Activated naive CD4-positive, alpha-beta T cell treated with anti-CD3 and anti-CD28 coated beads for 36 hours (primary cell): ENCODE measurements at regions of chrX and their contacts with region 1.

Region 1: DNA sequence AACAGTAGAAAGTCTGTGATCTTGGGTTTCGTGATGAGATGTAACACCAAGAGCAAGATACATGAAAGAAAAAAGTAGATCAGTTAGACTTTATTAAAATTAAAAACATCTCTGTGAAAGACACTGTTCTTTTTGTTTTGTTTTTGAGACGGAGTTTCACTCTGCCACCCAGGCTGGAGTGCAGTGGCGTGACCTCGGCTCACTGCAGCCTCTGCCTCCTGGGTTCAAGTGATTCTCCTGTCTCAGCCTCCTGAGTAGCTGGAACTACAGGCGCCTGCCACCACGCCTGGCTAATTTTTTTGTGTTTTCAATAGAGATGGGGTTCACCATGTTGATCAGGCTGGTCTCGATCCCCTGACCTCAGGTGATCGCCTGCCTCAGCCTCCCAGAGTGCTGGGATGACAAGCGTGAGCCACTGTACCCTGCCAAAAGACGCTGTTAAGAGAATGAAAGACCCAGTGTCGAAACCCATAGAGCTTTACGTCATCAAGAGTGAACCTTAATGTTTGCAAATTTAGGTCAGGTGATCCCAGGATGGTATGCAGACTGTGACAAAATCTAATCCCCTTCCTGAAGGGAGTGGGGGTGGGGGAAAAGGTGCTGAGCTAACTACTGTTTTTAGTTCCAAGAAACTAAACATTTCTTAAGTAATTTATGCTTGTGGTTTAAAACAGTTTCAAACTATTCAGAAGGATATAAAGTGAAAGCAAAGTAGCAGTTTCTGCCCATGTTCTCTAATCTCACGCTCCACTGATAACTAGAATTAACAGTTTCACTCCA is 8.0 kb downstream of the OFD1 start:
- DNase-seq: peak; percentile 75
- H3K4me3 Mint-ChIP-seq: peak overlapping the region; percentile 58
- H3K27ac Mint-ChIP-seq: peak overlapping the region; percentile 85
- H3K4me1 Mint-ChIP-seq: peaks cover 31% of the 10 kb centered on the region
- H3K27me3 Mint-ChIP-seq: no peaks in the 10 kb centered on the region

Region 2: DNA sequence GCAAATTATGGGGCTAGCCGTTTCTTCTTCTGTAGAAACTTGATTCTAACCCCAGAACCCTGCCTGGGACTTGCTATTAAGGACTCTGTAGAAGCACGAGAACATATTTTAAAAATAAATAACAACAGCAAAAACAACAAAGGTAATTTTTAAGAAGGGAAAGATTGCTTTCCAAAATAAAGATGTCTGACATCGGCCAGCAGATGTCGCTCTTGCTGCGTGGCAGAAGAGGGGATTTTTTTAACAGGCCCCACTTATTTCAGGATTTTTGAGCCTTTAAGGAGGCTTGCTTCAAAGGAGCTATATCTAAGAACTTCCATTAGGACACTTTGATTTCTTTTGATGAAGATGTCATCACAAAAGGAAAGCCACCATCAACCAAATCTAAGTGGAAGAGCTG is 236.0 kb before region 1 on chrX:
- CTCF ChIA-PET with region 1: no interaction called
- intact Hi-C with region 1: loop called (anchors 5 kb)
- DNase-seq: peak; percentile 61
- H3K4me3 Mint-ChIP-seq: no peak overlapping the region
- H3K27ac Mint-ChIP-seq: no peak overlapping the region
- H3K4me1 Mint-ChIP-seq: peaks cover 7% of the 10 kb centered on the region
- H3K27me3 Mint-ChIP-seq: no peaks in the 10 kb centered on the region

Region 3: GRCh38 chrX:13653022-13653693 is 89.4 kb before region 1 on chrX and contains the start of gene TCEANC:
- CTCF ChIA-PET with region 1: interaction called, 3 read pairs
- intact Hi-C with region 1: loop called (anchors 2 kb)
- DNase-seq: peak; percentile 95
- H3K4me3 Mint-ChIP-seq: peak within 1 kb of the TSS; percentile 88
- H3K27ac Mint-ChIP-seq: peak within 1 kb of the TSS; percentile 93
- H3K4me1 Mint-ChIP-seq: peaks cover 24% of the 10 kb centered on the region
- H3K27me3 Mint-ChIP-seq: no peaks in the 10 kb centered on the region
- total RNA-seq, gene TCEANC: 2.5 to 2.7 TPM

Region 4: GRCh38 chrX:13688958-13689740 is 53.4 kb before region 1 on chrX and contains the start of gene RAB9A:
- CTCF ChIA-PET with region 1: interaction called, 4 read pairs
- intact Hi-C with region 1: loop called (anchors 2 kb)
- DNase-seq: peak; percentile 83
- H3K4me3 Mint-ChIP-seq: peak within 1 kb of the TSS; percentile 82
- H3K27ac Mint-ChIP-seq: peak within 1 kb of the TSS; percentile 96
- H3K4me1 Mint-ChIP-seq: peaks cover 65% of the 10 kb centered on the region
- H3K27me3 Mint-ChIP-seq: no peaks in the 10 kb centered on the region
- total RNA-seq, gene RAB9A: 22.8 to 23.3 TPM

Region 5: DNA sequence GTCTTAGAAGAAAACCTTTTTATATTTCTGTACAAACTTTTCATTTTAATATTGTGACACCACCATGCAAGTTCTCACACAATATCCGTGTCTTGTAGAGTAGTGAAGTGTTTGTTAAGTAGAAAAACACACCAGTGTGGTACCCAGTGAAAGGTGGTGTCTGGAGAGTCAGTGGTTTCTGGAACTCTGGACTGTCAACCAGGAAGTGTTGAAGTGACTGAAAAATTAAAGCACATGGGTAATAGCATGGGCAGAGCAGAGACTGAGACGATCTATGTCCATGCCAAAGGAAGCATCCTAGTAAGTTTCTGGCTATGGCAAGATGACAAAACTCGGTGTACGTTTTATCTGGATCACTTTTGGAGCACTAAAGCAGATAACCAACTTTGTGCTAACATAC is 31.4 kb before region 1 on chrX:
- CTCF ChIA-PET with region 1: no interaction called
- intact Hi-C with region 1: no loop called
- DNase-seq: no peak
- H3K4me3 Mint-ChIP-seq: no peak overlapping the region
- H3K27ac Mint-ChIP-seq: no peak overlapping the region
- H3K4me1 Mint-ChIP-seq: peaks cover 15% of the 10 kb centered on the region
- H3K27me3 Mint-ChIP-seq: no peaks in the 10 kb centered on the region

Region 6: DNA sequence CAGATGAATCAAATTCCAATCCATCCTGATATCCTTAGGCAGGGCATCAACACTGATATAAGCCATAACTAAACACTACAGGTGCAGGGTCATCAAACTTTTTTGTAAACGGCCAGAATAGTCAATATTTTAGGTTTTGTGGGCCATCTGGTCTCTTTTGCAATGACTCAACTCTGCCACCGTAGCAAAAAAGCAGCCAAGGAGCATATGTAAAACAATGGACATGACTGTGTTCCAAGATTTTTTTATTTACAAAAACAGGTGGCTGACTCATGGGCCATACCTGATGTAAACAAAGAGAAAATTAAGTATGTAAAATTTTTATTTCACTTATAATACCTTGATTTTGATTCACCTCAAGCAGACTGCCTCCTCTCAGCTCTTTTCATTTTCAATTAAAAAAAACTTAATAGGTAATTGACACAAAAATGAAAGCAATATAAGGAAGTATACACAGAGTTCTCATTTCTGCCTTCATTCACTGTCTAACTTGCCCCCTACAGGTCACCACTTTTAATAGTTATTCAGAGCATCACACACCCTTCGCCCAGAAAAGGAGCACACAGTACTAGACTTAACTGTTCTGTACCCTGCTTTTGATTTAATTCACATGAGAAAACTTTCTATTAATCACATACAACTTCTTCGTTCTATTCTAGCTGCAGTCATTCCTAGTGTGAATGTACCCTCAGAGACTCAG is 109.6 kb after region 1 on chrX:
- CTCF ChIA-PET with region 1: no interaction called
- intact Hi-C with region 1: no loop called
- DNase-seq: no peak
- H3K4me3 Mint-ChIP-seq: no peak overlapping the region
- H3K27ac Mint-ChIP-seq: no peak overlapping the region
- H3K4me1 Mint-ChIP-seq: no peaks in the 10 kb centered on the region
- H3K27me3 Mint-ChIP-seq: no peaks in the 10 kb centered on the region

Region 7: DNA sequence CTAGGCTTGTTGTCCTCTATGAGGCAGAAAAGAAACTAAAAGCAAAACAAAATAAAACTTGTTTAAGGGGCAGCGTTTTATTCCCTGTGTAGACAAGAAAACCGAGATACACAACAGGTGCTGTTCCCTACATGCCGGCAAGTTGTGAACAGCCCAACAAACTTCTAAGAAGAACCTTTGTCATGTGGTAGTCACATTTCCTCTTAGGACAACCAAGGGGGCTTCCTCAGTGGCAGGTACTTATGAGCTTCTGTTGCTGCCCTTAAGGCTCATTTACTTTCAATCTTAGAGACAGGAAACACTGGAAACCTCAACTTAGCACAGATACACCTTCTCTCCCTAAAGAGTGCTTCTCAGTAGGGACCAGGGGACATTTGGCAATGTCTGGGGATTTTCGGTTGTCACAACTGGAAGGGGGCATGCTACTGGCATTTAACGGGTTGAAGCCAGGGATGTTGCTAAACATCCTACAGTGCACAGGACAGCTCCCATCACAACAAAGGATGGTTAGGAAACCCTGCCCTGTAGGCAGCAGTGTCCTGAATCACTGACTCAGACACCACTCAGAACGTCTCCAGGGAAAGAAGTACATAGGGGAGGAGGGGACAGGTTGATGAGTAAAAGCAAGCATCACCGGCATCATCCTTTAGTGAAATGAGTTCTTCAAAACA is 1416.3 kb after region 1 on chrX:
- CTCF ChIA-PET with region 1: no interaction called
- intact Hi-C with region 1: loop called (anchors 2 kb)
- DNase-seq: peak; percentile 51
- H3K4me3 Mint-ChIP-seq: peak overlapping the region; percentile 54
- H3K27ac Mint-ChIP-seq: peak overlapping the region; percentile 53
- H3K4me1 Mint-ChIP-seq: peaks cover 35% of the 10 kb centered on the region
- H3K27me3 Mint-ChIP-seq: no peaks in the 10 kb centered on the region